ENCODE measurements at regions of chr7 and their contacts with region 1.

Region 1: DNA sequence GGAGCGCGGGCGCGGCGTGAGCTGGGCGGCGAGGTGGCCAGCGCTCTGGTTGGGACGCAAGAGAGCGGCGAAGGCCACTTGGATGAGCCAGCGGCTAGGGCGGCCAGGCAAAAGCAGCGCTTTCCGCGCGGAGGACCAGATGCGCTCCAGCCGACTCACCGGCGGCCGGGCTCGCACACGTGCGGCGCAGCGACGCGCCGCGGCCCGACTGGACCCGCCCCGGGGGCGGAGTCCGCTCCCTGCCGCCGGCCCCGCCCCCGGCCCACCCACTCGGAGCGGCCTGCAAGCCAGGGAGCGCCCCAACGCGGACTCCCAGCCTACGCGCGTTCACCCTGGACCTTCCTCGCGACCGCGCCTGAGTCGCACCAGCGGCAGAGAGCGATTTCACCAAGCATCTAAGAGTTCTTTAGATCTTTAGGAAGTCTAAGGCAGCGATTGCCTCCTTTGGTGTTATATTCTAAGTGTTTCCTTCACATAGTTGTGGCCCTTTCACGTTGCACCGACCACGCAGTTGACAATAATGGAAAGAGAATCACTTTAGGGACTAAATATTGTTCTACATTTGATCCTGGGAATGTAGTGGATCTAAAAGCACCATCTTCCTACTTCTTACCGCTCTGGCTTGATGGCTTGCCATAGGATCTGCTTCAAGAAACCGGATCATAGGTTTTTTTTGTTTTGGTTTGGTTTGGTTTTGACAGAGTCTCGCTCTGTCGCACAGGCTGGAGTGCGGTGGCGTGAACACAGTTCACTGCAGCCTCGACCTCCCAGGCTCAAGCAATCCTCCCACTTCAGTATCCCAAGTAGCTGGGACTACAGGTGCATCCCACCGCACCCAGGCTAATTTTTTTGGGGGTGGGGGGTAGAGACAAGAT is at the start of gene PUS7:
- DNase-seq: peak; percentile 88
- ATAC-seq: peak; percentile 95
- H3K4me3 ChIP-seq: peak within 1 kb of the TSS; percentile 72
- H3K27ac ChIP-seq: peak within 1 kb of the TSS; percentile 86
- H3K4me1 ChIP-seq: peaks cover 2% of the 10 kb centered on the region; the same call in 1 of the 2 replicates
- H3K27me3 ChIP-seq: no peaks in the 10 kb centered on the region
- CTCF ChIP-seq: no peak
- POLR2A ChIP-seq: peak; percentile 84
- RAD21 ChIP-seq: no peak
- total RNA-seq, gene PUS7: 17.0 and 24.7 TPM in 2 replicates

Region 2: GRCh38 chr7:105387621-105388372 is 134.5 kb before region 1 on chr7:
- CTCF ChIA-PET with region 1: no interaction called
- POLR2A ChIA-PET with region 1: no interaction called
- dilution Hi-C with region 1: no loop called
- in situ Hi-C with region 1: no loop called
- intact Hi-C with region 1: loop called (anchors 5 kb)
- DNase-seq: peak; percentile 28
- ATAC-seq: peak; percentile 52
- H3K4me3 ChIP-seq: peak overlapping the region; percentile 92
- H3K27ac ChIP-seq: peak overlapping the region; percentile 45
- H3K4me1 ChIP-seq: no peaks in the 10 kb centered on the region
- H3K27me3 ChIP-seq: no peaks in the 10 kb centered on the region
- CTCF ChIP-seq: no peak
- POLR2A ChIP-seq: no peak
- RAD21 ChIP-seq: no peak

Region 3: DNA sequence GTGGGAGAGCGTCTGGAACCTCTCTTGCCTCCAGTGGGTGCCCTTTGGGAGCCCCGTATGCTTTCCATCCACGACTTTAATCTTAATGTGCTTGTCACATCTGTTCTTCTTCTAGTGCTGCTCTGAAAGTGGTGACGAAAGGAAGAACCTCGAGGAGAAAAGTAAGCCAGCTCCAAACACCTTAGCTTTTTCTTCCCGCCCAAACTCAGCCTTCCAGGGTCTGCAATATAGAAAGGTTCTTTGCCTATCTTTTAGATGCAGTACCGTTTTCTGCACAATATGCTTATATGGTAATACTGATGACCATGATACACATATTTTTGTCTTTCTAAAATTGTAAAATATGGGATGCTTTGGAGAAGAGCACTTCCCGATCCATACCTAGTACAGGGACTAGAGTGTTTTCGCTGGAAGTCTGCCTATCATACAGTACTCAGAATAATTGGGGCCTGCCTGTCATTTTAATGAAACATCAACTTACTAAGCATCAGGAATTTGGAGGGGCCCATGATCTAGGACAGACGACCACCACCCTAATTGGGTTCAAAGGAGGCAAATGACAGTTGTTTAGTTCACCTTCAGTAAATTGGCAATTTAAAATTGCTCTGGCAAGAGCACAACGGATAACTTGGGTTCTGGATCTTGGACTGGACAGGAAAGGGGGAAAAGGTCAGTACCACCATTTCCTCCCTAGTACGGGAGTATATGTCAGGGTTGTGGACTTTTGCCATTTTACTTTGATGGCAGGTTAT is 10.6 kb after region 1 on chr7:
- CTCF ChIA-PET with region 1: no interaction called
- POLR2A ChIA-PET with region 1: no interaction called
- dilution Hi-C with region 1: no loop called
- in situ Hi-C with region 1: no loop called
- intact Hi-C with region 1: no loop called
- DNase-seq: no peak
- ATAC-seq: no peak
- H3K4me3 ChIP-seq: peak overlapping the region; percentile 95
- H3K27ac ChIP-seq: peak overlapping the region; percentile 94
- H3K4me1 ChIP-seq: peaks cover 2% of the 10 kb centered on the region; the same call in 1 of the 2 replicates
- H3K27me3 ChIP-seq: no peaks in the 10 kb centered on the region
- CTCF ChIP-seq: no peak
- POLR2A ChIP-seq: no peak
- RAD21 ChIP-seq: no peak

Region 4: GRCh38 chr7:105759670-105760550 is 237.6 kb after region 1 on chr7:
- CTCF ChIA-PET with region 1: no interaction called
- POLR2A ChIA-PET with region 1: no interaction called
- dilution Hi-C with region 1: no loop called
- in situ Hi-C with region 1: no loop called
- intact Hi-C with region 1: no loop called
- DNase-seq: peak; percentile 71
- ATAC-seq: peak; percentile 76
- H3K4me3 ChIP-seq: no peak overlapping the region
- H3K27ac ChIP-seq: peak overlapping the region; percentile 77; the same call in 1 of the 2 replicates
- H3K4me1 ChIP-seq: peaks cover 14% of the 10 kb centered on the region
- H3K27me3 ChIP-seq: no peaks in the 10 kb centered on the region
- CTCF ChIP-seq: peak; percentile 74
- POLR2A ChIP-seq: no peak
- RAD21 ChIP-seq: peak; percentile 81

Measured in IMR-90 (cell line).